Motor neuron (in vitro differentiated cells): ENCODE measurements at regions of chr2 and their contacts with region 1.

Region 1: GRCh38 chr2:127174136-127174535 is 46.0 kb downstream of the CYP27C1 start:
- ATAC-seq: peak in 2 of 8 experiments; percentile 0 to 65
- H3K4me3 ChIP-seq: no peak overlapping the region
- H3K27ac ChIP-seq: no peak overlapping the region
- H3K4me1 ChIP-seq: peaks cover 24 to 25% of the 10 kb centered on the region in 2 donors

Region 2: DNA sequence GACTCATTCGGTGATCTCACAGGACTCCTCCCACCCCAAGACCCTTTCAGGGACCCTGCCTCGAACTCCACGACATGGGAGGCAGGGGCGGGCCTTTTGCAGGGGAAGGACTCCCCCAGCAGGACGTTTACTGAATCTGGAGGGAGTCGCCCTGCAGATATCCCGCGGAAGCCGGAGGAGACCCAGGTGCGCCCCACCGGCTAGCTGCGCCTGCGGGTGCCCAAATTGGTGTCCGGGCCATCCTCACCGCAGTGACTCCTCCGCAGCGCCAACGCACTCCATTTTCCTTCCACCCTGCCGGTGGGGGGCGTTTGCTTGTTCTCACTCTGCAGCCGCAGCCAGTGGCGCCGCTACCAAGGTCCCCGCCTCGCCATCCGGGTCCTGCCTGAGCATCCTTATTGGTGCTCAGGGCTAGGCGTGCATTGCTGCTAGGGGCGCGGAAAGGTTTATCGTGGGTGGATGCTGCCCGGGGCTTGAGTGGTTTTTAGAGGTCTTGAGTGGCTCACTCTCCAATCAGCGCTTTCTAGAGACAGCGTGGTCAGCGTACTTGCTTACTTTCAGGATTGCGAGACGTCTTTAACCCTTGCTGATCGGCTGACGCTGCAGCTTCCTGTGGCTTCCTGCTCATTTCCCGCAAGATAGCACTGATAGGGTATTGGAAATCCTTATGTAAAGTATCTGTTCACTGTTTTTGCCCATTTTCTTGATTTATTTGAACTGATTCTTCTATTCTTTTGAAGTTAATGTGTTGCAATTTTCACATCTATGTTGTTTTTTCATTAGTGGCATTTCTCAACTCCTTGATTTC is 148.6 kb before region 1 on chr2:
- in situ Hi-C with region 1: no loop called
- ATAC-seq: peak; percentile 85 to 96 (median 90)
- H3K4me3 ChIP-seq: peak overlapping the region; percentile 22 to 37 (median 29)
- H3K27ac ChIP-seq: peak overlapping the region; percentile 12 to 38
- H3K4me1 ChIP-seq: peaks cover 4 to 6% of the 10 kb centered on the region in 2 donors

Region 3: DNA sequence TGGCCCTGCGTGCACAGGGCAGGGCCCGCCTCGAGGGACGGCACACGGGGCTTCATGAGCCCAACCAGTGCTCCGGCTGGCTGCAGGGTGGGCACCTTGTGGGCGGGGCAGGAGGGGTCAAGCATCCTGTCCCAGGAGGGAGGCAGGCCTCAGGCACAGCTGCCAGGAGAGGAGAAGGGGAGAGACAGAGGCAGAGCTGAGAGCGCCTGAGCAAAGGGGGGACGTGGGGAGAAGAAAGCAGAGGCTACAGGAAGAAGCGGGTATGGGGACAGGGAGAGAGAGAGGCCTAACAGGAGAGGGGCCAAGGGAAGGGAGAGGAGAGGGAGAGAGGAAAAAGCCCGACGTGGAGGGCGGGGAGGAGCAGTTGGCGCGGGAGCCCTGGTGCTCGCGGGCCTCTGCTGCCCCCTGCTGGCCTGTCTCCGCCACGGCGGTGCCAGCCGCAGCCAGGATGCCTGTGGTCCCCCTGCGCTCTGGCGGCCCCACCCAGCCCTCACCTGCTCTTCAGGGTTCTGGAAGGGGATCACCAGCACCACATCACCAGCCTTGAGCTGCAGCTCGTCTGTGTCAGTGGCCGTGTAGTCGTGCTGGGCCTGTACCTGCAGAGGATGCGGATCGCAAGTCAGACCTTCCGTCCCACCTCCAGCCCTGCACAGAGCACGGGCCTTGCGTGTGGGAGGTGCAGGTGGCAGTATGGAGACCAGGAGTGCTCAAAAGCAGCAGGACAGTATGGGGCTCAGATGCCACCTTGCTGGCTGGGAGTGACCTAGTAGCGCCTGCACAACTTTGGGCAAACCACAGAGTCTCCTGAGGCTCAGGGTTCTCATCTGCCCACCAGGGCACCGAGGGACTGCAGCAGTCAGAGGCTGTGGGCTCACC is 124.0 kb before region 1 on chr2:
- in situ Hi-C with region 1: loop called in 1 of 9 experiments (anchors 25 kb)
- ATAC-seq: peak; percentile 48 to 85 (median 79)
- H3K4me3 ChIP-seq: no peak overlapping the region
- H3K27ac ChIP-seq: peak overlapping the region in 1 of 2 donors; percentile 24
- H3K4me1 ChIP-seq: peaks cover 0 to 8% of the 10 kb centered on the region in 2 donors

Region 4: DNA sequence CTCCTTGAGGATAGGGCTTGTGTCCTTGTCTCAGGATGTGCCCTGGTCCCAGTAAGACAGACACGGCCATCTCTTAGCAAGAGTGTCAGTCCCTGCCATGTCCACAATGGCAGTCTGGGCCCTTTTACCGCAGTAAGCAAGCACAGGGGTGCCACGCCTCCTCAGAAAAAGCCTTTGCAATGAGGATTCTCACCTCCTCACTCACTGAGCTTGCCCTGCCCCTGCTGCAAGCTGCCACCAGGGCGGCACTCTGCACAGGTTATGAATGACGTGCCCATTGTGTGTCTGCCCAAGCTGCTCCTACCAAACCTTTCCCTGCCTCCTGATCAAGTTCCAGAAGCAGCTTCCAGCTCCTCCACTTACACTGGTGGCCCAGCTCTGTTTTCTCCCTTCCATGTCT is 96.5 kb after region 1 on chr2:
- in situ Hi-C with region 1: no loop called
- ATAC-seq: no peak
- H3K4me3 ChIP-seq: no peak overlapping the region
- H3K27ac ChIP-seq: no peak overlapping the region
- H3K4me1 ChIP-seq: no peaks in the 10 kb centered on the region